ENCODE measurements at regions of chr1 and their contacts with region 1.

Region 1: GRCh38 chr1:25997828-25998761 is at the start of gene PAFAH2:
- DNase-seq: peak; percentile 98
- H3K4me3 ChIP-seq: peak within 1 kb of the TSS; percentile 64
- H3K27ac ChIP-seq: peak within 1 kb of the TSS; percentile 89
- H3K4me1 ChIP-seq: peaks cover 7% of the 10 kb centered on the region
- H3K27me3 ChIP-seq: no peaks in the 10 kb centered on the region
- CTCF ChIP-seq: peak; percentile 95
- total RNA-seq, gene PAFAH2: 34.8 to 40.8 TPM

Region 2: DNA sequence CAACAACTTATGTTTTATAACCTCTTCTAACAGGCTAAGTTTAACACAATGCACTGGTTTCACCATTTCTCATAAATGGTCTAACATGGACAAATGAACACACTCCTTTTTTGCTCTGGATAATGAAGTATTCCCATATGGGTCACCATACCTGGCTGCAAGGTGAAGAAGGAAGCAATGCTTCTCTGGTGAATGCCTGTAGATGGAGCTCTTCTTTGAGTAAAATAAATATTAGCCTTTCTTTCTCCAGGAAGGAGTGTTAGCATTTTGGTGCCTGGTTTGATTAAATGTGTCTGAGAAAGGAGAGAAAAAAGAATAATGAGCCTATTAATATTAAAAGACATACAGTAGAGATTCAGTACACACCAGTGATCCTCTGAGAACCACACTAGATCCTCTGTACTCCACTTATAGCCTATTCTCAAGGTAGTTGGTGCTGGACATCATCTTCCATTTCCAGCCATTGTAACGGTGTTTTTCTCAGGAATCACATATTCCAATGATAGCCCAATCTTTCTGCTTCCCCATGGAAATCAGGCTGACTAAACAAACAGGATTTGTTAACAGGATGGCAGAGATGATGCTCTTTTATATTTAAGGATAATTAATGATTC is 160.7 kb before region 1 on chr1:
- intact Hi-C with region 1: loop called (anchors 5 kb)
- DNase-seq: no peak
- H3K4me3 ChIP-seq: no peak overlapping the region
- H3K27ac ChIP-seq: no peak overlapping the region
- H3K4me1 ChIP-seq: no peaks in the 10 kb centered on the region
- H3K27me3 ChIP-seq: no peaks in the 10 kb centered on the region
- CTCF ChIP-seq: no peak

Region 3: GRCh38 chr1:25895365-25895993 is 102.6 kb before region 1 on chr1:
- intact Hi-C with region 1: loop called (anchors 1 kb)
- DNase-seq: peak; percentile 90
- H3K4me3 ChIP-seq: no peak overlapping the region
- H3K27ac ChIP-seq: no peak overlapping the region
- H3K4me1 ChIP-seq: no peaks in the 10 kb centered on the region
- H3K27me3 ChIP-seq: no peaks in the 10 kb centered on the region
- CTCF ChIP-seq: peak; percentile 97

Region 4: GRCh38 chr1:26289158-26290059 is 291.3 kb after region 1 on chr1:
- intact Hi-C with region 1: no loop called
- DNase-seq: no peak
- H3K4me3 ChIP-seq: no peak overlapping the region
- H3K27ac ChIP-seq: peak overlapping the region; percentile 67
- H3K4me1 ChIP-seq: peaks cover 11% of the 10 kb centered on the region
- H3K27me3 ChIP-seq: no peaks in the 10 kb centered on the region
- CTCF ChIP-seq: no peak

Measured in colonic mucosa (tissue), 4 donors.